CD8-positive, alpha-beta T cell (primary cell): ENCODE measurements at regions of chr12 and their contacts with region 1.

Region 1: DNA sequence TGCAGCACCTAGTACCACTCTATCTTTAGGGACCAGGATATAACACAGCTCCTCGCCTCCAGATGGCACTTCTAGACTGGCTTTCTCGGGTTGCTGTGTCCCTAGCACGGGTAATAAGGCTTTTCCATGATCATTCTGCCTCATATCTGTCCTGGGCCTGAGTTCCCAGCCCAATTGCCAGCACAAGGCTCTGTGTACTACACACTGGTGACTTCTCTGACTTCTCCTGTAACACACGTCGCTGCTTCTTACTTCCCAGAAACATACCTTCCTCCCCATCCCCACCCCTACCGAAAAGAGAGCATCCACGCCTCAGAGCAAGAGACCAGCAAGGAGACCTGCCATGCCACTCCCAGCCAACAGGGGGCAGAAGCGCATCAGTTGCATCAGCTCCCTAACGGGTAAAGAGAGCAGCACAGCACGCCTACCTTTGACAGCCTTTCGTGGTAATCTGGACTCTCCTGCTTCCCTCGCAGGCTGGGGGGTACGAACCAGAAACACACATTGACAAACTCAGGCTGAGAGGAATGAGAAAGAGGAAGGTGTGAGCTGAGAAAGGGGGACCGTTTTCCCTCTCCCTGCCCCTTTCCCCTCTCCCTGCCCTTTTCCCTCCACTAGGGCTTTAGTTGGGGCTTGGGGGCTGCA is 21.2 kb upstream of the ZNF740 start:
- DNase-seq: peak; percentile 81 to 94 (median 89)
- ATAC-seq: peak; percentile 100
- H3K4me3 ChIP-seq: no peak overlapping the region
- H3K4me3 Mint-ChIP-seq: no peak overlapping the region
- H3K27ac ChIP-seq: no peak overlapping the region
- H3K27ac Mint-ChIP-seq: peak overlapping the region; percentile 1
- H3K4me1 ChIP-seq: peaks cover 8% of the 10 kb centered on the region
- H3K4me1 Mint-ChIP-seq: peaks cover 6% of the 10 kb centered on the region
- H3K27me3 ChIP-seq: no peaks in the 10 kb centered on the region
- H3K27me3 Mint-ChIP-seq: no peaks in the 10 kb centered on the region
- CTCF ChIP-seq: peak; percentile 97

Region 2: GRCh38 chr12:53098982-53099651 is 60.2 kb before region 1 on chr12:
- CTCF ChIA-PET with region 1: interaction called, 10 read pairs
- POLR2A ChIA-PET with region 1: no interaction called
- intact Hi-C with region 1: no loop called
- DNase-seq: peak; percentile 70 to 94 (median 89)
- ATAC-seq: peak; percentile 61
- H3K4me3 ChIP-seq: no peak overlapping the region
- H3K4me3 Mint-ChIP-seq: peak overlapping the region; percentile 79
- H3K27ac ChIP-seq: peak overlapping the region in 1 of 2 experiments; percentile 23
- H3K27ac Mint-ChIP-seq: peak overlapping the region; percentile 84
- H3K4me1 ChIP-seq: peaks cover 52% of the 10 kb centered on the region
- H3K4me1 Mint-ChIP-seq: peaks cover 48% of the 10 kb centered on the region
- H3K27me3 ChIP-seq: no peaks in the 10 kb centered on the region
- H3K27me3 Mint-ChIP-seq: no peaks in the 10 kb centered on the region
- CTCF ChIP-seq: peak; percentile 98

Region 3: DNA sequence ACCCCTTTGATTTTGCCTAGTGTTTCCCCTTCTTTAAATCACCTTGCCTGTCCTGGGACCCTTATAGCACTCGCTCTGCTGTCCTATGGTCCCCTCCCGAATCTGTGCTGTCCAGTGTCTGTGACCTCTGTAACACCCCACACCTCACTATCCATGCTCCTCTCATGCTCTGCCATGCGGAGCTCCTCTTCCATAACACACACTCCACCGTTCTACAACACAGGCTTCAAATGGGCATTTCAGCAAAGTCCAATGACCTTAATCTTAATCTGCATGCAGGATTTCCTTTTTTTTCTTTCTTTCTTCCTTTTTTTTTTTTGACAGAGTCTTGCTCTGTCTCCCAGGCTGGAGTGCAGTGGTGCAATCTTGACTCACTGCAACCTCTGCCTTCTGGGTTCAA is 30.1 kb before region 1 on chr12:
- CTCF ChIA-PET with region 1: no interaction called
- POLR2A ChIA-PET with region 1: no interaction called
- intact Hi-C with region 1: no loop called
- DNase-seq: no peak
- ATAC-seq: no peak
- H3K4me3 ChIP-seq: no peak overlapping the region
- H3K4me3 Mint-ChIP-seq: no peak overlapping the region
- H3K27ac ChIP-seq: no peak overlapping the region
- H3K27ac Mint-ChIP-seq: no peak overlapping the region
- H3K4me1 ChIP-seq: no peaks in the 10 kb centered on the region
- H3K4me1 Mint-ChIP-seq: no peaks in the 10 kb centered on the region
- H3K27me3 ChIP-seq: no peaks in the 10 kb centered on the region
- H3K27me3 Mint-ChIP-seq: no peaks in the 10 kb centered on the region
- CTCF ChIP-seq: no peak

Region 4: GRCh38 chr12:53205747-53206419 is 46.6 kb after region 1 on chr12:
- CTCF ChIA-PET with region 1: interaction called, 51 read pairs
- POLR2A ChIA-PET with region 1: interaction called, 3 read pairs
- intact Hi-C with region 1: loop called in 1 of 2 experiments (anchors 1 kb)
- DNase-seq: peak in 8 of 9 experiments; percentile 43 to 74 (median 69)
- ATAC-seq: peak; percentile 53
- H3K4me3 ChIP-seq: peak overlapping the region; percentile 68 to 71
- H3K4me3 Mint-ChIP-seq: peak overlapping the region; percentile 84
- H3K27ac ChIP-seq: peak overlapping the region; percentile 48 to 71
- H3K27ac Mint-ChIP-seq: peak overlapping the region; percentile 90
- H3K4me1 ChIP-seq: peaks cover 70% of the 10 kb centered on the region
- H3K4me1 Mint-ChIP-seq: peaks cover 71% of the 10 kb centered on the region
- H3K27me3 ChIP-seq: no peaks in the 10 kb centered on the region
- H3K27me3 Mint-ChIP-seq: no peaks in the 10 kb centered on the region
- CTCF ChIP-seq: no peak

Region 5: DNA sequence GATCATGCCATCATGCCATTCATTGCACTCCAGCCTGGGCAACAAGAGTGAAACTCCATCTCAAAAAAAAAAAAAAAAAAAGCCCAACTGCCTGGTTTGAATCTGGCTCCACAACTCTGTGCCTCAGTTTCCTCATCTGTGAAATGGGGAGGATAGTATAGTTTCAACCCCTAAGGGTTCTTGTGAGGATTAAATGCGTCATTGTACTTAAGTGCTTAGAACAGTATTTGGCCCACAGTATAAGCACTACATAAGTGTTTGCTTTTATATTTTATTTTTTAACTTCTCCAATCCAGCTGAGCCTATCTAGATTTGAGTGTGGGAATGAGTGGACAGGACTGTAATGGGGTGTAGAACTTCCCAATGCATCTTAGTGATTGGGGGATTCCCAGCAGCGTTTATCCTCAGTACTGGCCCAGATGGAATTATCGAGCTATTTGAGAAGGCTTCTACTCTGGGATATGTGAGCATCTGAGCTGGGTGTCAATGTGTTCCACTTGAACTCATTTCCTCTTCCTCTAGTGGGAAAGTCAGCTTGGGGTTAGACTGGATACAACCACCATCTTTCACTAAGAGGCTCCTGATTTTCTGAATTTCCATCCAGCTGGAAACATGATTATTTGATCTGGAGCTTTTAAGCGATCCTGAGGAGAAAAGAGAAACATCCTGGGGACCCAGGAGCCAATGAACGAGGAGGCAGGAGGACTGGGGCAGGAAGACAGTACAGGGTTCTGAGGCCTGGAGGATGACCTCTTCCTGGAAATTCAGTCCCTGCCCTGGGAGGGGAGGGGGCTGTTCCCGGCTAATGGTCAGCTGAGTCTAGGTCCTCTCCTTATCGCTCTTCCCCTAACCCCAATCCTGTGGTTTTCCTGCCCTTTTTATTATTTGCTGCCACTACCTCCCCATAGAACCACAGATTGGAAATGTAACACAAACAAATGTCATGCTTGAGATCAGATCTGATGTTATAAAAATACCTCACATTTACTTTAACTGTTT is 99.5 kb after region 1 on chr12:
- CTCF ChIA-PET with region 1: interaction called, 11 read pairs
- POLR2A ChIA-PET with region 1: no interaction called
- intact Hi-C with region 1: loop called in 1 of 2 experiments (anchors 5 kb)
- DNase-seq: no peak
- ATAC-seq: no peak
- H3K4me3 ChIP-seq: no peak overlapping the region
- H3K4me3 Mint-ChIP-seq: no peak overlapping the region
- H3K27ac ChIP-seq: no peak overlapping the region
- H3K27ac Mint-ChIP-seq: no peak overlapping the region
- H3K4me1 ChIP-seq: peaks cover 22% of the 10 kb centered on the region
- H3K4me1 Mint-ChIP-seq: peaks cover 26% of the 10 kb centered on the region
- H3K27me3 ChIP-seq: no peaks in the 10 kb centered on the region
- H3K27me3 Mint-ChIP-seq: no peaks in the 10 kb centered on the region
- CTCF ChIP-seq: no peak

Region 6: GRCh38 chr12:53287741-53288216 is 128.5 kb after region 1 on chr12:
- CTCF ChIA-PET with region 1: interaction called, 132 read pairs
- POLR2A ChIA-PET with region 1: no interaction called
- intact Hi-C with region 1: loop called in 1 of 2 experiments (anchors 1 kb)
- DNase-seq: peak; percentile 42 to 86 (median 75)
- ATAC-seq: peak; percentile 96
- H3K4me3 ChIP-seq: no peak overlapping the region
- H3K4me3 Mint-ChIP-seq: no peak overlapping the region
- H3K27ac ChIP-seq: no peak overlapping the region
- H3K27ac Mint-ChIP-seq: no peak overlapping the region
- H3K4me1 ChIP-seq: no peaks in the 10 kb centered on the region
- H3K4me1 Mint-ChIP-seq: peaks cover 4% of the 10 kb centered on the region
- H3K27me3 ChIP-seq: no peaks in the 10 kb centered on the region
- H3K27me3 Mint-ChIP-seq: no peaks in the 10 kb centered on the region
- CTCF ChIP-seq: peak; percentile 62

Region 7: GRCh38 chr12:53410951-53411350 is 251.6 kb after region 1 on chr12:
- CTCF ChIA-PET with region 1: no interaction called
- POLR2A ChIA-PET with region 1: no interaction called
- intact Hi-C with region 1: no loop called
- DNase-seq: no peak
- ATAC-seq: no peak
- H3K4me3 ChIP-seq: no peak overlapping the region
- H3K4me3 Mint-ChIP-seq: no peak overlapping the region
- H3K27ac ChIP-seq: no peak overlapping the region
- H3K27ac Mint-ChIP-seq: no peak overlapping the region
- H3K4me1 ChIP-seq: no peaks in the 10 kb centered on the region
- H3K4me1 Mint-ChIP-seq: peaks cover 15% of the 10 kb centered on the region
- H3K27me3 ChIP-seq: no peaks in the 10 kb centered on the region
- H3K27me3 Mint-ChIP-seq: no peaks in the 10 kb centered on the region
- CTCF ChIP-seq: no peak